GM12878 (cell line): ENCODE measurements at regions of chr16 and their contacts with region 1.

Region 1: GRCh38 chr16:4402439-4403132 is 13.8 kb downstream of the CORO7 start:
- DNase-seq: no peak
- ATAC-seq: peak; percentile 89
- H3K4me3 ChIP-seq: no peak overlapping the region
- H3K27ac ChIP-seq: no peak overlapping the region
- H3K4me1 ChIP-seq: no peaks in the 10 kb centered on the region
- H3K27me3 ChIP-seq: no peaks in the 10 kb centered on the region
- CTCF ChIP-seq: peak; percentile 83 to 96 (median 88)
- EP300 ChIP-seq: no peak
- POLR2A ChIP-seq: no peak
- RAD21 ChIP-seq: peak; percentile 85

Region 2: DNA sequence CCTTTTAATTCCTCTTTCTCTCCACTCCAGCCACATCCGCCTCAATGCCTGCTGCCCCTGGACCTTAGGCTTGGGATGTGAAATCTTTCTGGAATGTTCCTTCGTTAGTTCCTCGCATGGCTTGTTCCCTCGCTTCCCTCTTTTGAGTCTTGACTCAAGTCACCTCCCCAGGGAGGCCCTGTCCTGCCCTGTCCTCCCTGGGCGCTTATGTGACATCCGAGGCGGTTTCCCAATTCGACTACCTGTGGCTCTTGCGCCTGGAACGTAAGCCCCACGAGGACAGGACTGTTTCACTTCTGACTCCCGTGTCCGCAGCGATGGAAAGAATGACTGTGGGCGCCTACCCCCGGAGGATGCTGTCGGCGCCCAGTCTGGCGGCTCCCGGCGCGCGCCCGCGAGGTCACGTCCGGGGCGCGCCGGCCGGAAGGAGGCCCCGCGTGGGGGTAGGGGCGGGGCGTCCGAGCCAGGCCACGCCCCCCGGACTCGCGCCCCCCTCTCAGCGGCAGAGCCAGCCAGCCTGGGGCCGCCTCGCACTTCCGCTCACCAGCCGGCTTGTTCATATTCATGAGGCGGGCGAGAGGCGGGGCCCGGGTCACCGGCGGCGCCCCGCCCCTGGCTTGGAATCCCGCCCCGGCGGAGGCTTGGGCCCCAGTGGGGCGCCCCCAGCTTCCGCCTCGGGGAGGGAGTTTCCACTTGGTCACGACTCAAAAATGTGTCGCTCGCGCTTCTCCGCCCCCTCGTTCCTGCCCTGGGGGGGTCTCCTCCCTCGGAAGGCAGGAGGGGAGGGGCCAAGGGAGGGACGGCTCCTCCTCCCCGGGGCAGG is 95.2 kb before region 1 on chr16:
- CTCF ChIA-PET with region 1: interaction called, 10 read pairs
- POLR2A ChIA-PET with region 1: no interaction called
- RAD21 ChIA-PET with region 1: interaction called, 4 read pairs
- SMC1A ChIA-PET with region 1: interaction called, 3 read pairs
- in situ Hi-C with region 1: no loop called
- intact Hi-C with region 1: loop called (anchors 5 kb)
- DNase-seq: peak; percentile 72
- ATAC-seq: peak; percentile 92
- H3K4me3 ChIP-seq: peak overlapping the region; percentile 94
- H3K27ac ChIP-seq: peak overlapping the region; percentile 87
- H3K4me1 ChIP-seq: peaks cover 13% of the 10 kb centered on the region
- H3K27me3 ChIP-seq: no peaks in the 10 kb centered on the region
- CTCF ChIP-seq: no peak
- EP300 ChIP-seq: no peak
- POLR2A ChIP-seq: peak; percentile 84
- RAD21 ChIP-seq: no peak

Region 3: GRCh38 chr16:4344983-4345835 is 57.4 kb before region 1 on chr16:
- CTCF ChIA-PET with region 1: interaction called, 30 read pairs
- POLR2A ChIA-PET with region 1: no interaction called
- RAD21 ChIA-PET with region 1: interaction called, 3 read pairs
- SMC1A ChIA-PET with region 1: interaction called, 3 read pairs
- in situ Hi-C with region 1: no loop called
- intact Hi-C with region 1: no loop called
- DNase-seq: no peak
- ATAC-seq: no peak
- H3K4me3 ChIP-seq: no peak overlapping the region
- H3K27ac ChIP-seq: no peak overlapping the region
- H3K4me1 ChIP-seq: no peaks in the 10 kb centered on the region
- H3K27me3 ChIP-seq: no peaks in the 10 kb centered on the region
- CTCF ChIP-seq: no peak
- EP300 ChIP-seq: no peak
- POLR2A ChIP-seq: no peak
- RAD21 ChIP-seq: no peak

Region 4: DNA sequence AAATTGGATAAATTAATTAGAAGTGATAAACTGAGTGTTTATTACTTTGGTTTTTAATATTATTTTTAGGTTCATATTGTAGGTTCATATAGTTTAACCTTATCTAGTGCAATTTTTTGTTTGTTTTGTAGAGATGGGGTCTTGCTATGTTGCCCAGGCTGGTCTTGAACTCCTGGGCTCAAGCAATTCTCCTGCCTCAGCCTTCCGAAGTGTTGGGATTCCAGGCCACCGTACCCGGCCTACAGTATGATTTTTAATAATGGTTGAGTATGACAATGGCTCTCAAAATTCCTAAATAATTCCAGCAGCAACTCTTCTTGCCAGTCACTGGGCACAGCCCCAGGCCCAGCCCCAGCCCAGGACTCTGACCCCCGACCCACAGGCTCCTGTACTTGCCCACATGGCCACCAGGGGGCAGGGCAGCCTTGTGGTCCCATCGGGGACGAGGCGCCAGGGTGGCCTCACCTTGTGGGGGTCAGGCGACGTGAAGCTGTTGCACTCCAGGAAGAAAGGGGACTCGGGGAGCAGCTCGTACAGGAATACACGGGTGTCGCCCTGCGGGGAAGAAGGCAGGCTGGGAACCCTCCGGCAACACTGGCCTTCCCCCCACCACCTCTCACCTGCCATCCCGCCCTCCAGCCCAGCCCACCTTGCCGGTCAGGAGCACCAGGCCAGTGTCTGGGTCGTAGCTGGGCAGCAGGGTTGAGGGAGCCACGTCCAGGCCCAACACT is 43.6 kb before region 1 on chr16:
- CTCF ChIA-PET with region 1: interaction called, 8 read pairs
- POLR2A ChIA-PET with region 1: no interaction called
- RAD21 ChIA-PET with region 1: no interaction called
- SMC1A ChIA-PET with region 1: interaction called, 11 read pairs
- in situ Hi-C with region 1: loop called (anchors 5 kb)
- intact Hi-C with region 1: loop called (anchors 1 kb)
- DNase-seq: no peak
- ATAC-seq: peak; percentile 91
- H3K4me3 ChIP-seq: no peak overlapping the region
- H3K27ac ChIP-seq: no peak overlapping the region
- H3K4me1 ChIP-seq: no peaks in the 10 kb centered on the region
- H3K27me3 ChIP-seq: no peaks in the 10 kb centered on the region
- CTCF ChIP-seq: peak; percentile 72 to 93 (median 76)
- EP300 ChIP-seq: no peak
- POLR2A ChIP-seq: no peak
- RAD21 ChIP-seq: peak; percentile 72

Region 5: GRCh38 chr16:4391631-4392381 is 10.8 kb before region 1 on chr16:
- CTCF ChIA-PET with region 1: interaction called, 21 read pairs
- POLR2A ChIA-PET with region 1: no interaction called
- RAD21 ChIA-PET with region 1: no interaction called
- SMC1A ChIA-PET with region 1: no interaction called
- in situ Hi-C with region 1: no loop called
- intact Hi-C with region 1: no loop called
- DNase-seq: no peak
- ATAC-seq: no peak
- H3K4me3 ChIP-seq: no peak overlapping the region
- H3K27ac ChIP-seq: no peak overlapping the region
- H3K4me1 ChIP-seq: no peaks in the 10 kb centered on the region
- H3K27me3 ChIP-seq: no peaks in the 10 kb centered on the region
- CTCF ChIP-seq: no peak
- EP300 ChIP-seq: no peak
- POLR2A ChIP-seq: no peak
- RAD21 ChIP-seq: no peak

Region 6: DNA sequence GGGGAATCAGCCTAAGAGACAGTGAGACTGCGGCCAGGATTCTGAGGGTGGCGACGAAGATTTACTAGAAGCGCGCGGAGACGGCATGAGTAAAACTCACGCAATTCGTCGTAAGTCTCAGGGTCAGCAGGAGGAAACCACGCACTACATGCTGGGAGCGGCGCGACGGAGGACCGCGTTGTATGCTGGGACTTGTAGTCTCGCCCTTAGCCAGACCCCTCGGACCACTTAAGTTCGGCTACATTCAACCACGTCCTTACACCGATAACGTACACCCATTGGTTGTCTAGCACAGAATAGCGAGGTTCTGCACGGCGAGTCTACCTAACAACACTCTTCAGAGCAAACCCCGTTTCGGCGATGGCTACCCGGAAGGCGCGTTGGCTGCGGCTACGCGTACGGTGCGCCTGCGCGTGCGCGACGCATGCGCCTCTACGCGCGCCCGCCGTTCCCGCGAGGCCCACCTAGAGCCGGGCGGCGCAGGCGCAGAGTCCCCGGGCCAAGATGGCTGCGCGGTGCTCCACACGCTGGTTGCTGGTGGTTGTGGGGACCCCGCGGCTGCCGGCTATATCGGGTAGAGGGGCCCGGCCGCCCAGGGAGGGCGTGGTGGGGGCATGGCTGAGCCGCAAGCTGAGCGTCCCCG is 22.9 kb after region 1 on chr16 and contains the start of gene DNAJA3:
- CTCF ChIA-PET with region 1: interaction called, 11 read pairs
- POLR2A ChIA-PET with region 1: no interaction called
- RAD21 ChIA-PET with region 1: interaction called, 9 read pairs
- SMC1A ChIA-PET with region 1: interaction called, 4 read pairs
- in situ Hi-C with region 1: no loop called
- intact Hi-C with region 1: no loop called
- DNase-seq: peak; percentile 91
- ATAC-seq: peak; percentile 95
- H3K4me3 ChIP-seq: peak within 1 kb of the TSS; percentile 92
- H3K27ac ChIP-seq: peak within 1 kb of the TSS; percentile 100
- H3K4me1 ChIP-seq: no peaks in the 10 kb centered on the region
- H3K27me3 ChIP-seq: no peaks in the 10 kb centered on the region
- CTCF ChIP-seq: no peak
- EP300 ChIP-seq: no peak
- POLR2A ChIP-seq: peak; percentile 98
- RAD21 ChIP-seq: no peak
- polyA plus RNA-seq, gene DNAJA3: 8.4 to 20.4 TPM

Region 7: GRCh38 chr16:4713663-4714501 is 311.3 kb after region 1 on chr16:
- CTCF ChIA-PET with region 1: no interaction called
- POLR2A ChIA-PET with region 1: no interaction called
- RAD21 ChIA-PET with region 1: no interaction called
- SMC1A ChIA-PET with region 1: no interaction called
- in situ Hi-C with region 1: no loop called
- intact Hi-C with region 1: no loop called
- DNase-seq: no peak
- ATAC-seq: no peak
- H3K4me3 ChIP-seq: no peak overlapping the region
- H3K27ac ChIP-seq: no peak overlapping the region
- H3K4me1 ChIP-seq: peaks cover 6% of the 10 kb centered on the region; the same call in 1 of the 2 replicates
- H3K27me3 ChIP-seq: no peaks in the 10 kb centered on the region
- CTCF ChIP-seq: no peak
- EP300 ChIP-seq: no peak
- POLR2A ChIP-seq: no peak
- RAD21 ChIP-seq: no peak

Region 8: GRCh38 chr16:4766874-4767628 is 364.5 kb after region 1 on chr16 and contains the start of gene ZNF500:
- CTCF ChIA-PET with region 1: no interaction called
- POLR2A ChIA-PET with region 1: no interaction called
- RAD21 ChIA-PET with region 1: no interaction called
- SMC1A ChIA-PET with region 1: no interaction called
- in situ Hi-C with region 1: no loop called
- intact Hi-C with region 1: no loop called
- DNase-seq: peak; percentile 84
- ATAC-seq: peak; percentile 94
- H3K4me3 ChIP-seq: peak within 1 kb of the TSS; percentile 91
- H3K27ac ChIP-seq: peak within 1 kb of the TSS; percentile 63
- H3K4me1 ChIP-seq: peaks cover 8% of the 10 kb centered on the region; the same call in 1 of the 2 replicates
- H3K27me3 ChIP-seq: no peaks in the 10 kb centered on the region
- CTCF ChIP-seq: no peak
- EP300 ChIP-seq: peak in 1 of 2 experiments; percentile 39; a peak in 1 of 4 replicates
- POLR2A ChIP-seq: peak; percentile 72
- RAD21 ChIP-seq: no peak
- polyA plus RNA-seq, gene ZNF500: 0.99 to 1.0 TPM